ENCODE measurements at regions of chr3 and their contacts with region 1.

Region 1: DNA sequence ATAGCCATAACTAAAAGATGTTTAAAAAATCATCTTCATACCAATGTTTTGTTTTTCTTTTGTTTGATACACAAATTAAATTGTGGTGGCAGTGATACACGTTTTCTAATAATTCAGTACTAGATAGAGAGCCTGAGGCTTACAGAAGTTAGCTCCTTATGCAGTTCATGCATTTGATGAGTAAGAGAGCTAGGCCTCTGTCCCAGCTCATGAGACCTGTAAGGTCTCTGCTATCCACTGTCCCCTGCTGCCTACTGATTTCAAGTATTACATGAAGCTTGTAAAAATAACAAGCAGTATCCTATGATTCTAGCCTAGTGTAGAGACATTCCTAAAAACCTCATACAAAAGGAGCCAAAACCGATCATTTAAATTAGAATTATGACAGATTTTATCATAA is 144.5 kb downstream of the MBNL1 start:
- DNase-seq: no peak
- ATAC-seq: peak; percentile 68 to 72
- H3K4me3 ChIP-seq: no peak overlapping the region
- H3K27ac ChIP-seq: peak overlapping the region; percentile 92 to 96 (median 94)
- H3K4me1 ChIP-seq: peaks cover 69 to 76% of the 10 kb centered on the region in 2 donors
- H3K27me3 ChIP-seq: no peaks in the 10 kb centered on the region
- CTCF ChIP-seq: no peak
- POLR2A ChIP-seq: no peak

Region 2: DNA sequence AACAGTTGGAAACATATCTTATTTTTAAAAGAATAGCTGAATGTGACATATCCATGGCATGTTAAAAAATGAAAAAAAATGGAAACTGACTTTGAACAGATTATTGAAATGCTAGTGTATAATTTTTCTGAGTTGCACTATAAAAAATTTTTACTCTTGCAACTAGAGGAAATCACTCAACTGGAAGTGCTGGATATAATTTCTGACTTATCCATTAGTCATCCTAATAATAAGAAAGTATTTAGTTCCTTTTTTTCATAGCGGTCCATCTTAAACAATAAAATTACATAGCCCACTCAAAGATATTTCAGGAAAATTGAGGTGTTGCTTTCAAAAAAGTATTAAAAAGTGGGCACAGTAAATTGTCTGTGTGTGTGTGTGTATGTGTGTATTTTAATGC is 63.8 kb before region 1 on chr3:
- in situ Hi-C with region 1: no loop called
- intact Hi-C with region 1: loop called (anchors 5 kb)
- DNase-seq: no peak
- ATAC-seq: no peak
- H3K4me3 ChIP-seq: no peak overlapping the region
- H3K27ac ChIP-seq: peak overlapping the region; percentile 71 to 95 (median 86)
- H3K4me1 ChIP-seq: peaks cover 87 to 98% of the 10 kb centered on the region in 2 donors
- H3K27me3 ChIP-seq: no peaks in the 10 kb centered on the region
- CTCF ChIP-seq: no peak
- POLR2A ChIP-seq: no peak

Measured in gastrocnemius medialis (tissue), 4 donors.